Activated B cell treated with CpG ODN at 0.5 μM for 24 hours (primary cell): ENCODE measurements at regions of chr7 and their contacts with region 1.

Region 1: GRCh38 chr7:39732837-39733804 is 109.7 kb downstream of the RALA start:
- DNase-seq: peak; percentile 95
- ATAC-seq: peak; percentile 89
- H3K4me3 Mint-ChIP-seq: peak overlapping the region; percentile 89
- H3K27ac Mint-ChIP-seq: peak overlapping the region; percentile 94
- H3K4me1 Mint-ChIP-seq: peaks cover 52% of the 10 kb centered on the region
- H3K27me3 Mint-ChIP-seq: no peaks in the 10 kb centered on the region
- CTCF ChIP-seq: no peak

Region 2: GRCh38 chr7:38908759-38909335 is 824.3 kb before region 1 on chr7 and contains the start of gene VPS41:
- CTCF ChIA-PET with region 1: no interaction called
- POLR2A ChIA-PET with region 1: interaction called, 9 read pairs
- intact Hi-C with region 1: loop called (anchors 2 kb)
- DNase-seq: peak; percentile 56
- ATAC-seq: peak; percentile 96
- H3K4me3 Mint-ChIP-seq: peak within 1 kb of the TSS; percentile 98
- H3K27ac Mint-ChIP-seq: peak within 1 kb of the TSS; percentile 94
- H3K4me1 Mint-ChIP-seq: peaks cover 52% of the 10 kb centered on the region
- H3K27me3 Mint-ChIP-seq: peaks cover 2% of the 10 kb centered on the region
- CTCF ChIP-seq: no peak
- total RNA-seq, gene VPS41: 78.5 and 91.8 TPM in 2 replicates

Region 3: GRCh38 chr7:39580149-39580874 is 152.8 kb before region 1 on chr7:
- CTCF ChIA-PET with region 1: interaction called, 53 read pairs
- POLR2A ChIA-PET with region 1: interaction called, 8 read pairs
- intact Hi-C with region 1: no loop called
- DNase-seq: peak; percentile 39
- ATAC-seq: peak; percentile 97
- H3K4me3 Mint-ChIP-seq: no peak overlapping the region
- H3K27ac Mint-ChIP-seq: no peak overlapping the region
- H3K4me1 Mint-ChIP-seq: peaks cover 3% of the 10 kb centered on the region
- H3K27me3 Mint-ChIP-seq: no peaks in the 10 kb centered on the region
- CTCF ChIP-seq: no peak

Region 4: DNA sequence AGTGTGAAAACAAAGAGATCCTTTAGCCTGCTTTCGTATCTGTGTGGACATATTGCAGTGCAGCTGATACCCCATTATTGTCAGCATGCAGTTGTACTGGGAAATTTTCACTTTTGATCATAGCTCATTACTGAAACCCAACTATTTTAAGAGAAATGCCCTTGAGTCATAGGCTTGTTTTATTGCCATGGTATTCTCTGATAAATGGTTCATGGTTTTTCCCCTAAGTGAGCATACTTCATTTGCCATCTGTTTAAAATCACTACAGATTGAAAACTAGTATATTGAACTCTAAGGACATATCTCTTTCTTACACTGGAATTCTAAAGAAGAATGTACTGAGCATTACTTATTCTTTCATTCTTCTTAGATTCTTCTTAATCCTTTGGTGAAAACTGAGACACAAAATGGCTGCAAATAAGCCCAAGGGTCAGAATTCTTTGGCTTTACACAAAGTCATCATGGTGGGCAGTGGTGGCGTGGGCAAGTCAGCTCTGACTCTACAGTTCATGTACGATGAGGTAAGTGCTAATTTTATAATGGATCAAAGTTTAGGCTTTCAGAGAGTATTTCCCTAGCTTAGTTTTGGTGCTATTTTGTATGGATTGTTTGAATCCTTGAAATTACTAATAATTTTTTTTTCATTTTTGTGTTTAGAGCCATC is 46.7 kb before region 1 on chr7:
- CTCF ChIA-PET with region 1: no interaction called
- POLR2A ChIA-PET with region 1: no interaction called
- intact Hi-C with region 1: loop called (anchors 1 kb)
- DNase-seq: no peak
- ATAC-seq: peak; percentile 40
- H3K4me3 Mint-ChIP-seq: no peak overlapping the region
- H3K27ac Mint-ChIP-seq: peak overlapping the region; percentile 7
- H3K4me1 Mint-ChIP-seq: peaks cover 23% of the 10 kb centered on the region
- H3K27me3 Mint-ChIP-seq: no peaks in the 10 kb centered on the region
- CTCF ChIP-seq: no peak

Region 5: DNA sequence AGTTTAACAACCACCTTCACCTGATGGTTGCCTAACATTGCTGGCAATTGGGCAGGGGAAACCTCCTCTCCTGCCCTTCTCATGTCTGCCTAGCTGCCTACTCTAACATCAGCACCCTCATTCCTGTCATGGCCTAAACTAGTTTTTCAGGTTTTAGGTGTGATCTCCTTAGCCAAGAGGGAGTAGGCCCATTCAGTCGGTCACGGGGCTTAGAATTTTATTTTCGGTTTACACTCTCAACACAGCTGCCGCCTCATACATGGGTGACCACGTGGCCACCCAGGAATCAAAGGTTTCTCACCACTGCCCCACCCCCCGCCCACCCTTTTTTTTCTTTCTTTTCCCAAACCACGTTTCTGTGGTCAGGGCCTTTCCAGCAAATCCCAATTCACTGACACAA is 12.5 kb before region 1 on chr7:
- CTCF ChIA-PET with region 1: no interaction called
- POLR2A ChIA-PET with region 1: no interaction called
- intact Hi-C with region 1: no loop called
- DNase-seq: no peak
- ATAC-seq: no peak
- H3K4me3 Mint-ChIP-seq: no peak overlapping the region
- H3K27ac Mint-ChIP-seq: no peak overlapping the region
- H3K4me1 Mint-ChIP-seq: no peaks in the 10 kb centered on the region
- H3K27me3 Mint-ChIP-seq: no peaks in the 10 kb centered on the region
- CTCF ChIP-seq: no peak

Region 6: DNA sequence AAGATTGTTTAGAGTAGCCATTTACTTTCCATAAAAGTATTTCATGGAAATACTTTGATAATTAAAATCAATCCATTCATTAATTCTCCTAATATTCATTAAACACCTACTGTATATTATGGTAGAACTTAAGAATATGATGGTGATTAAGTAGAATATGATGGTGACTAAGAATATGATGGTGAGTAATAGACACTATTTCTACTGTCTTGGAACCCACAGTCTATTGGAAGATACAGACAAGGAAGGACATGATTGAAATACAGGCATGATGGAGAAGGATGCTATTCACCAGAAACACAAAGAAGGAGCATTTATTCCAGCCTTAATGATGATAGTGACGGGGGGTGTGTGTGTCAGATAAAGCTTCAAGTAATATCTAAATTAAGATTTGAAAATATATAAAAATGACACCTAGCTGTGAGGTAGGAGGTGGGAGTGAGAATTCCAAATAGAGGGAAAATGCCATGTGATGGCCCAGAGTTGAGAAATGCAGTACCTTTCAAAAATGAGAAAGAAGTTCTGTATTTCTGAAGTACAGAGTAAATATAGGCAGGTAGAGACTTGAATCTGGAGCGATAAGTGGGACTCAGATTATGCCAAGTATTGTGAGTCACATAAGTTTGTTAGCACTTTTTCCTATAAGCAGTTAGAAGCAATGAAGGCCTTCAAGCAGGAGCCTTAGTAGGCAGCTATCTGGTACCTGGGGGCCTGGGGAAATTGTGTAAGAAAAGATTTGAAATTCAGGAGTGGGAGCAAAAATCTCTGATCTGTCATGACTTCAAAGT is 204.4 kb after region 1 on chr7:
- CTCF ChIA-PET with region 1: no interaction called
- POLR2A ChIA-PET with region 1: no interaction called
- intact Hi-C with region 1: no loop called
- DNase-seq: no peak
- ATAC-seq: no peak
- H3K4me3 Mint-ChIP-seq: no peak overlapping the region
- H3K27ac Mint-ChIP-seq: no peak overlapping the region
- H3K4me1 Mint-ChIP-seq: no peaks in the 10 kb centered on the region
- H3K27me3 Mint-ChIP-seq: peaks cover 6% of the 10 kb centered on the region
- CTCF ChIP-seq: no peak

Region 7: GRCh38 chr7:40134428-40135316 is 401.6 kb after region 1 on chr7 and contains the starts of genes MPLKIP and SUGCT:
- CTCF ChIA-PET with region 1: no interaction called
- POLR2A ChIA-PET with region 1: interaction called, 8 read pairs
- intact Hi-C with region 1: loop called (anchors 1 kb)
- DNase-seq: peak; percentile 91
- ATAC-seq: peak; percentile 90
- H3K4me3 Mint-ChIP-seq: peak within 1 kb of the TSS; percentile 97
- H3K27ac Mint-ChIP-seq: peak within 1 kb of the TSS; percentile 97
- H3K4me1 Mint-ChIP-seq: peaks cover 35% of the 10 kb centered on the region
- H3K27me3 Mint-ChIP-seq: no peaks in the 10 kb centered on the region
- CTCF ChIP-seq: no peak
- total RNA-seq, gene MPLKIP: 29.9 and 35.1 TPM in 2 replicates
- total RNA-seq, gene SUGCT: 0.61 and 1.3 TPM in 2 replicates

Region 8: DNA sequence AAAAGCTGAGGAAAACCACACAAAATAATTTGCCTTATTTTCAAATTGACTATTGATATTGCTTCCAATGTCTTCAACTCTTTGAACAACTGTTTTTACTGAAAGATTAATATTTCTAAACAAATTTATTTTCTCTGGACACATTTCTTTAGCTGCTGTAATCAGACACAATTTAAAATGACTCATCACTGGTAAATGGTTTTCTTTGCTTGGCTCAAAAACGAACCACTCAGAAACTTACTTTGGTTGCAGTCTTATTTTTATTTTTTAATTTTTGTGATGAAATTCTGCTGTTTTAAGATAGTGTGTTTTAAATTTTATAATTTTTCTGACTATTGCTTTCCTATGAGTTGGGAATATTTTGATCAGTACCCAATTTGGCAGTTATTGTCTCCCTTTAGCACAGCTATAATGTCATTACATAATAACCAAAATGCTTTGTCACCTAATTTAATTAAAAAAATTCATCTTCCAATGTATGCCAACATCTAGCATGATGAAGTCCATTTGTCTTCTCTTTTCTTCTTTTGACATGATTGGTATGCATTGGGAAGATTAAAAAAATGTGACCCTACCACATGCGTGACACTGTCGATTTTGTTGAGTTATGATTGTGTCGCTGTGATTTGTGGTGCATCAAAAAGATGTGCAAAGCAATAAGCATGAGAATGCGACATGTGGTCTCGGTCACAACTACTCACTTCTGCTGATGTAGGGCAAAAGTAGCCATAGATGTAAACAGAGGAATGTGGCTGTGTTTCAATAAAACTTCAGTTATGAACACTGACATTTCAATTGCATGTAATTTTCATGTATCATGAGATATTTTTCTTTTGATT is 624.0 kb after region 1 on chr7:
- CTCF ChIA-PET with region 1: no interaction called
- POLR2A ChIA-PET with region 1: no interaction called
- intact Hi-C with region 1: no loop called
- DNase-seq: no peak
- ATAC-seq: no peak
- H3K4me3 Mint-ChIP-seq: no peak overlapping the region
- H3K27ac Mint-ChIP-seq: no peak overlapping the region
- H3K4me1 Mint-ChIP-seq: no peaks in the 10 kb centered on the region
- H3K27me3 Mint-ChIP-seq: peaks cover 3% of the 10 kb centered on the region
- CTCF ChIP-seq: no peak